ENCODE measurements at regions of chr11 and their contacts with region 1.

Region 1: DNA sequence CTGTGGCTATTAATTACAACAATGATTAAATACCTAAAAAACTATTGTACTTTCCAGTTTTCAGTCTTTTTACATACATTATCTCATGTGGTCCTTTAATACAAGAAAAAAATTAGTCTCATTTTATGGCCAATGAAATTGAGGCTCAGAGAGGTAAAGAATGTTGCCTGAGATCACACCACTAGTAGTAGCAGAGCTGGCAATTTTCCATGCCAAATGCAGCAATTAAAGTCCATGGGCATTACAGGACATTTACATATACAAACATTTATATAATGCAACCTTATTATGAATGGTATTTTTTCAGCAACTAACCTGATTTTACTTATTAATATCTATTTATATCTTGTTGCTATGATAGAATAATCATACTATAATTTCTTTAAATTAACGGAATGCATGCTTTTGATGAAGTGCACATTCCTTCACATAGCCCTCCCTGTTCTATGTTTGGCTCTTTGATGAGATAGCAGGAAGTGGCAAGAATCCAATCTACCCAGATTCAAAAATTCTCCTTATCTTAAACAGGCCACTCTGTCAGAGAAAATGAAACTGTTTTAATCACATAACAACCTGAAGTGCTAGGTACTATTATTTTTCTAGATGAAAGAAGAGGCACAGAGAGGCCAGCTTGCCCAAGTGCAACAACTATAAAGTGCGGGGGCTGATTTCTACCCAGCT is 120.9 kb upstream of the LDLRAD3 start:
- DNase-seq: no peak
- H3K4me3 ChIP-seq: no peak overlapping the region
- H3K27ac ChIP-seq: peak overlapping the region in 1 of 2 experiments; percentile 22; a peak in 2 of 4 replicates
- H3K4me1 ChIP-seq: peaks cover 6 to 12% of the 10 kb centered on the region in 2 experiments; a peak in 3 of 4 replicates
- H3K27me3 ChIP-seq: no peaks in the 10 kb centered on the region
- CTCF ChIP-seq: no peak
- EP300 ChIP-seq: no peak
- RAD21 ChIP-seq: no peak

Region 2: GRCh38 chr11:35352077-35352888 is 470.7 kb before region 1 on chr11:
- CTCF ChIA-PET with region 1: no interaction called
- POLR2A ChIA-PET with region 1: no interaction called
- DNase-seq: no peak
- H3K4me3 ChIP-seq: no peak overlapping the region
- H3K27ac ChIP-seq: peak overlapping the region in 1 of 2 experiments; percentile 84; a peak in 2 of 4 replicates
- H3K4me1 ChIP-seq: peaks cover 12 to 34% of the 10 kb centered on the region in 2 experiments; a peak in 3 of 4 replicates
- H3K27me3 ChIP-seq: no peaks in the 10 kb centered on the region
- CTCF ChIP-seq: no peak
- EP300 ChIP-seq: no peak
- RAD21 ChIP-seq: no peak

Region 3: DNA sequence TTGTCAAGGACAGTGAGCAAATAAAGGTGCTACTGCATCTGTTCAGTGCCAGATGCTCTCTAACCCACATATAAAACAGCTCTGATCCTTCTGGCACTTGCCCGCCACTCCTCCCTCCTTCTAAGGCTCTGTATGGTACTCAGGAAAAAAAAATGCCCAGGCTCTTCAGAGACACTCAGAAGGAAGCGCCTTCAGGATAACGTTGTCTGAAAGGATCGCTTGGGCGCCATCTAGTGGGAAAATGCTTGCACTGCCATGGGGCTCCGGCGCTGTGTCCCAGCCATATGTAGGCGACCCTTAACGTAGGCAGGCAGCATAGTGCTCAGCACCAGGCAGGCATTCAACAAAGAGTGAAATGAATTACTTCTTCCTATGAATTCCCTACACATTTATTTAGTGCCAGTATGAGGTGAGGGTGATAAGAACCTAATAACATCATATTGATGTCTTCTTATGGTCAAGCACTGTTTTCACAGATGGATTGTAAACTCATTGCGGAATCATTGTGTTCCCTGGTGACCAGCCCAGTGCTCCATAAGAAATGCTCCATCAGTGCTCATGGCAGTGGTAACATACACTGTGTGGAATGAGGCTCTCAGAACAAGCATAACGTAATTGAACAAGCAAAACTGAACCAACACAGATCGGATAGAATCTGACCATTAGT is 337.2 kb before region 1 on chr11:
- CTCF ChIA-PET with region 1: interaction called, 13 read pairs
- POLR2A ChIA-PET with region 1: no interaction called
- DNase-seq: peak; percentile 72
- H3K4me3 ChIP-seq: no peak overlapping the region; a peak in 1 of 4 replicates
- H3K27ac ChIP-seq: no peak overlapping the region
- H3K4me1 ChIP-seq: peaks cover 0 to 2% of the 10 kb centered on the region in 2 experiments; a peak in 1 of 4 replicates
- H3K27me3 ChIP-seq: no peaks in the 10 kb centered on the region
- CTCF ChIP-seq: peak; percentile 91
- EP300 ChIP-seq: no peak
- RAD21 ChIP-seq: peak; percentile 79

Region 4: GRCh38 chr11:35515224-35515623 is 307.7 kb before region 1 on chr11:
- CTCF ChIA-PET with region 1: no interaction called
- POLR2A ChIA-PET with region 1: no interaction called
- DNase-seq: no peak
- H3K4me3 ChIP-seq: no peak overlapping the region
- H3K27ac ChIP-seq: 0 out of 4 replicates have a peak overlapping the region, but pooled peaks of 1 of the 2 experiments have one; percentile 4
- H3K4me1 ChIP-seq: peaks cover 3 to 38% of the 10 kb centered on the region in 2 experiments; a peak in 3 of 4 replicates
- H3K27me3 ChIP-seq: no peaks in the 10 kb centered on the region
- CTCF ChIP-seq: no peak
- EP300 ChIP-seq: peak in 1 of 2 experiments; percentile 38; a peak in 1 of 4 replicates
- RAD21 ChIP-seq: no peak

Region 5: DNA sequence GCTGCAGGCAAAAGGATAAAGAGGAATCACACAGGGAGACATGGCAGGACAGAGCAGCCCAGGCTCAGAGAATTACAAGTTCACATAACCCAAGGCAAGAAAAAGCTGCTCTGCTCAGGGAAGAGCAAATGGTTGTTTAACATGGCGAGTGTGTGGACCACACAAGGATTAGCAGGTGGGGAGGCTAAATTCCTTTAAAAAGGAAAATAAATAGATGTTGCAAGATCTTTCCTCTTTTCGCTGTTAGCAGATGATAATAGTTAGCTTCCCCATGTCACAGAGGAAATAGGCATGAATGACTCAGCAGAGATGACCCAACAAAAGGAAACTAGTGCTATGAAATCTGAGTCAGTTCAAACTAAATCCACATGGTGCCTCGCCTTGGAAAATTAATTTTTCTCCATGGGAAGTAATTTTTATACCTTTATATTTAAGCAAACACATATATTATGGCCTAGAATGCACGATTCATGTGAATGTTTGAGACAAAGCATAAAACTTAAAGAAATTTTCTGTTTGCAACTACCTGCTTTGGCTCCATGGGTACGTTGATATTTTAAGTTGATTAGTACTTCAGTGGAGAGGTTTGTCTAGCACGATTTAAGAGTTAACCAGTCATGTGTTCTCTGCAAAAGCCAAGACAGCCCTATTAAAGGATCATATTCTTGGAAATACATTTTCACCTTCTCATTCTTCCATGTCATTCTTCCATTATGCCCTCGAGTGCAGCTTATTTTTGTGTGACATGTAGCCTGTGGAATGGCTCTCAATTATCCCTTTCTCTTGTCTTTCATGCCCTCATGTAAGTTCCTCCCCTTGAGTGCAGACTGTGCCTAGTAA is 243.2 kb before region 1 on chr11:
- CTCF ChIA-PET with region 1: no interaction called
- POLR2A ChIA-PET with region 1: no interaction called
- DNase-seq: no peak
- H3K4me3 ChIP-seq: 0 out of 4 replicates have a peak overlapping the region, but pooled peaks of 1 of the 2 experiments have one; percentile 37
- H3K27ac ChIP-seq: peak overlapping the region; percentile 81 to 94; a peak in 3 of 4 replicates
- H3K4me1 ChIP-seq: peaks cover 8 to 31% of the 10 kb centered on the region in 2 experiments
- H3K27me3 ChIP-seq: no peaks in the 10 kb centered on the region
- CTCF ChIP-seq: no peak
- EP300 ChIP-seq: peak; percentile 27 to 83; a peak in 1 of 4 replicates
- RAD21 ChIP-seq: no peak

Region 6: GRCh38 chr11:35792148-35792845 is 30.7 kb before region 1 on chr11:
- CTCF ChIA-PET with region 1: interaction called, 41 read pairs
- POLR2A ChIA-PET with region 1: no interaction called
- DNase-seq: no peak
- H3K4me3 ChIP-seq: no peak overlapping the region
- H3K27ac ChIP-seq: no peak overlapping the region
- H3K4me1 ChIP-seq: peaks cover 24 to 35% of the 10 kb centered on the region in 2 experiments
- H3K27me3 ChIP-seq: no peaks in the 10 kb centered on the region
- CTCF ChIP-seq: no peak
- EP300 ChIP-seq: no peak
- RAD21 ChIP-seq: no peak

Region 7: GRCh38 chr11:35852056-35852455 is 29.1 kb after region 1 on chr11:
- CTCF ChIA-PET with region 1: interaction called, 19 read pairs
- POLR2A ChIA-PET with region 1: no interaction called
- DNase-seq: no peak
- H3K4me3 ChIP-seq: no peak overlapping the region
- H3K27ac ChIP-seq: no peak overlapping the region
- H3K4me1 ChIP-seq: peaks cover 0 to 2% of the 10 kb centered on the region in 2 experiments; a peak in 1 of 4 replicates
- H3K27me3 ChIP-seq: no peaks in the 10 kb centered on the region; the same call in 1 of the 2 replicates
- CTCF ChIP-seq: no peak
- EP300 ChIP-seq: no peak
- RAD21 ChIP-seq: no peak

Region 8: GRCh38 chr11:35986947-35987346 is 164.0 kb after region 1 on chr11:
- CTCF ChIA-PET with region 1: no interaction called
- POLR2A ChIA-PET with region 1: no interaction called
- DNase-seq: no peak
- H3K4me3 ChIP-seq: no peak overlapping the region
- H3K27ac ChIP-seq: no peak overlapping the region
- H3K4me1 ChIP-seq: no peaks in the 10 kb centered on the region
- H3K27me3 ChIP-seq: no peaks in the 10 kb centered on the region
- CTCF ChIP-seq: no peak
- EP300 ChIP-seq: no peak
- RAD21 ChIP-seq: no peak

Region 9: DNA sequence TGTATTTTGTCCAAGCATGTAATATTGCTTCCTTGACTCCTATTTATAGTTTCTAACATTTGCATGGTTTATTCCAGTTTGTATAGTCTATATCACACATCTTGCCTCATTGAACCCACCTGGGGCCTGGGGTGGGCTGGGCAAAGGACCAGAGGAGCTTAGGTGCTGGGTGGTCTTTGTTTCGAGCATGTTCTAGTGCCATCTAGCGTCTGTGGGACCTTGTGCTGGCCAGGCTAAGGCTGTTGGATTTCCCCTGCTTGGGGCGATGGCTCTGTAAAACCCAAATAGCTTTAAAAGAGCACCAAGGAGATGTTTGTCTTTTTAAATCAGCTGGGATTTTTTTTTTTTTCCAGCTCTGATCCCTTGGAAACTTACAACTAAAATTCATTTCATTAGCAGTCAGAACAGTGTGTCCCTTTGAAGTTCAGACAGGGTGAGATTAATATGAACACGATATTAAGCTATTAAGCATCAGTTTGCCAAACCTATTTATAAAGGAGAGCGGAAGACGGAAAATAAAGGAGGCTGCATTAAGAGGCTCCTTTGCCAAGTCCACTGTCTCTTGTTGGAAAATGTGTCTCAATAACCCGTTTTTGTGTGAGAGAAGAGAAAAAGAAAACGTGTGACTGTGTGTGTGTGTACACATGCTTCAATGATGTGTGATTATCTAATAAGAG is 308.9 kb after region 1 on chr11:
- CTCF ChIA-PET with region 1: interaction called, 75 read pairs
- POLR2A ChIA-PET with region 1: no interaction called
- DNase-seq: peak; percentile 65
- H3K4me3 ChIP-seq: no peak overlapping the region; a peak in 1 of 4 replicates
- H3K27ac ChIP-seq: no peak overlapping the region
- H3K4me1 ChIP-seq: peaks cover 0 to 5% of the 10 kb centered on the region in 2 experiments; a peak in 3 of 4 replicates
- H3K27me3 ChIP-seq: no peaks in the 10 kb centered on the region
- CTCF ChIP-seq: peak; percentile 50
- EP300 ChIP-seq: no peak
- RAD21 ChIP-seq: peak; percentile 74

Region 10: DNA sequence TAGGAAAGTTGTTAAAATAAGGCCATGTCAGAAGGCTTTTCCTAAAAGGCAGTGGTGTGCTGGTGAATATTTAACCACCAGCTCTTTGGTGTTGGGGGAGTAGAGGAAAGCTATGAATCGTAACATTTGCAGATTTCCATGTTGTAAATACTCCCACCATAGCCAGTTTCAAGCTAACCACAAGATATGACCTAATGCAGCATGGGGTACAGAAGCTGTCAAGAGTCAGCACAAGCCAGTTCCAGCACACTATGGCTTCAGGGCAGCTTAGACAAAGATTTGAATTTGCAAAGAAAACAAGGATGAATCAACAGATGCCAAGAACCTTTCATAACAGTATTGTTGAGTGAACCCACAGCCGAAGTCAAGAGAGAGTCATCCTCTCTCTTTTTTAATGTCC is 426.3 kb after region 1 on chr11:
- CTCF ChIA-PET with region 1: interaction called, 26 read pairs
- POLR2A ChIA-PET with region 1: no interaction called
- DNase-seq: no peak
- H3K4me3 ChIP-seq: no peak overlapping the region
- H3K27ac ChIP-seq: no peak overlapping the region
- H3K4me1 ChIP-seq: peaks cover 10 to 21% of the 10 kb centered on the region in 2 experiments; a peak in 3 of 4 replicates
- H3K27me3 ChIP-seq: no peaks in the 10 kb centered on the region
- CTCF ChIP-seq: no peak
- EP300 ChIP-seq: no peak
- RAD21 ChIP-seq: no peak

Region 11: GRCh38 chr11:36478700-36479329 is 655.9 kb after region 1 on chr11:
- CTCF ChIA-PET with region 1: interaction called, 12 read pairs
- POLR2A ChIA-PET with region 1: no interaction called
- DNase-seq: peak; percentile 45
- H3K4me3 ChIP-seq: no peak overlapping the region
- H3K27ac ChIP-seq: no peak overlapping the region
- H3K4me1 ChIP-seq: peaks cover 2 to 4% of the 10 kb centered on the region in 2 experiments; a peak in 2 of 4 replicates
- H3K27me3 ChIP-seq: no peaks in the 10 kb centered on the region
- CTCF ChIP-seq: peak; percentile 80
- EP300 ChIP-seq: no peak
- RAD21 ChIP-seq: peak; percentile 90